PC-9 (cell line): ENCODE measurements at regions of chr6 and their contacts with region 1.

Region 1: GRCh38 chr6:7238900-7239589 is 74.0 kb downstream of the SSR1 start:
- DNase-seq: peak; percentile 53 to 84
- H3K4me3 ChIP-seq: no peak overlapping the region
- H3K27ac ChIP-seq: no peak overlapping the region
- H3K4me1 ChIP-seq: peaks cover 57% of the 10 kb centered on the region
- H3K27me3 ChIP-seq: no peaks in the 10 kb centered on the region
- CTCF ChIP-seq: peak; percentile 67

Region 2: DNA sequence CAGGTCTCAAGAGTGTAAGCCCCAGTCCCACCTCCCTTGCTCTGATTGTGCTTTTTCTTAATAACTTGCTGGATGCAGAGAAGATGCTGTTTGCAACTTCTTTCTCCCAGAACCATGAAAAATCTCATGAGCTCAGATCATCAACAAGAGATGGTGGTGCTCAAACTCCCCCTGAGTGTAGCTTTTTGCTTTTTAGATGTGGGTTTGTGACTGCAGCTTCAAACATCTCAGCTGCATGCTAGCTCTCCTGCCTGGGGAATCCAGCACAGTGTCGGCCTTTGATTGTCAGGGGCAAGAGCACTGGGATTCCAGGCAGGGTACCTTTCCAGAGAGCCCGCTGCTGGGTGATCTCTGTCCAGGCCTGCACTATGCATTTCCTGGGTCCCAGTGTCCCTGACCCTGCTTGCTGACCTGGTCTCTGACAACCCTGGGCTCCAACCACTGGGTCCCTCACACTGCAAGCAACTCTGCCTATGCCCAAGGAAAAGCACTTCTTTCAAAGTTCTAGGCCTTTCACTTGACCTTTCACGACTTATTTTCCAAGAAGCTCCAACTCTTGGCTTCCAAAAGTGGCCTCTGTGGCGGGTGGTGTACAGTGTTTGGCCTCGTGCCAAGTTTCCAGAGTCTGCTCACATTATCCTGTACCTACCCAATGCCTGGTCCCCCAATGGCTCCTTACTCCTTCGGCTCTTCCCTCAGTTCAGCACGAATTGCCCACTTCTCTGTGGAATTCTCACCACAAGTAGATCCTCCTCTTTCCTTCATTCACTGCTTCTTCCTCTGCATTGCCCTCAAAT is 720.2 kb before region 1 on chr6:
- CTCF ChIA-PET with region 1: no interaction called
- POLR2A ChIA-PET with region 1: no interaction called
- intact Hi-C with region 1: no loop called
- DNase-seq: no peak
- H3K4me3 ChIP-seq: no peak overlapping the region
- H3K27ac ChIP-seq: no peak overlapping the region
- H3K4me1 ChIP-seq: no peaks in the 10 kb centered on the region
- H3K27me3 ChIP-seq: peaks cover 55% of the 10 kb centered on the region; the same call in 1 of the 2 replicates
- CTCF ChIP-seq: no peak

Region 3: GRCh38 chr6:6724539-6725467 is 514.2 kb before region 1 on chr6:
- CTCF ChIA-PET with region 1: interaction called, 3 read pairs
- POLR2A ChIA-PET with region 1: no interaction called
- intact Hi-C with region 1: loop called (anchors 1 kb)
- DNase-seq: peak in 1 of 2 experiments; percentile 70
- H3K4me3 ChIP-seq: no peak overlapping the region
- H3K27ac ChIP-seq: no peak overlapping the region
- H3K4me1 ChIP-seq: peaks cover 14% of the 10 kb centered on the region
- H3K27me3 ChIP-seq: no peaks in the 10 kb centered on the region
- CTCF ChIP-seq: peak; percentile 64

Region 4: DNA sequence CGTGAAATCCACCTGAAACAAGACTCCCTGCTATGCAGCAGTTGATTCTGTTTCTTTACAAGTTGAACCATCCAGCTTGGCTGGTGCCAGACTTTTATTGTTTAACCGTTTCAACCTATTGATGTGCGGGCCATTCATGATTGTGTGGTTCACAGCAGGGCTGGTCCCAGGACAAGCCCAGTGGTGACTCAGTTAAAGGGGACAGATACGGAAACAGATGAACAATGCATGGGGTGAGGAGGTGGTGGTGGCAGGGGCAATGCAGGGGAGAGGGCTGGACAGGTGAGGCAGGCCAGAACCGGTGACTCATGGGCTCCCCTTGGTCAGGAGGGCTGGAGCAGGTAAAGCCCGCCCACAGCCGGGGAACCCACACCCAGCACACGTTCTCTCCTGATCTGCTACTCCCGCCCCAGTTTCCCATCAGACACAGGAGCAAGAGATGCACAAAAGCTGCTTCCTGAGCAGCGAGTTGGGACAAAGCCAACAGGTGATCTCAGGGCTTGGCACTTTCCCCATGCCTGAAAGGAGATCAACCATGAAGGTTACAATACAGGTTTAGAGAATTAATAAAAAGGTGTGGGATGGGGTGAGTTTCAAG is 418.3 kb before region 1 on chr6:
- CTCF ChIA-PET with region 1: interaction called, 3 read pairs
- POLR2A ChIA-PET with region 1: interaction called, 3 read pairs
- intact Hi-C with region 1: loop called (anchors 2 kb)
- DNase-seq: peak; percentile 96 to 97
- H3K4me3 ChIP-seq: no peak overlapping the region
- H3K27ac ChIP-seq: peak overlapping the region; percentile 94
- H3K4me1 ChIP-seq: peaks cover 69% of the 10 kb centered on the region
- H3K27me3 ChIP-seq: no peaks in the 10 kb centered on the region
- CTCF ChIP-seq: no peak

Region 5: GRCh38 chr6:7107578-7108195 is 131.4 kb before region 1 on chr6 and contains the start of gene RREB1:
- CTCF ChIA-PET with region 1: interaction called, 3 read pairs
- POLR2A ChIA-PET with region 1: no interaction called
- intact Hi-C with region 1: loop called (anchors 2 kb)
- DNase-seq: peak in 1 of 2 experiments; percentile 40
- H3K4me3 ChIP-seq: peak within 1 kb of the TSS; percentile 90
- H3K27ac ChIP-seq: peak within 1 kb of the TSS; percentile 69
- H3K4me1 ChIP-seq: peaks cover 29% of the 10 kb centered on the region
- H3K27me3 ChIP-seq: no peaks in the 10 kb centered on the region
- CTCF ChIP-seq: no peak
- total RNA-seq, gene RREB1: 29.2 and 38.4 TPM in 2 replicates

Region 6: DNA sequence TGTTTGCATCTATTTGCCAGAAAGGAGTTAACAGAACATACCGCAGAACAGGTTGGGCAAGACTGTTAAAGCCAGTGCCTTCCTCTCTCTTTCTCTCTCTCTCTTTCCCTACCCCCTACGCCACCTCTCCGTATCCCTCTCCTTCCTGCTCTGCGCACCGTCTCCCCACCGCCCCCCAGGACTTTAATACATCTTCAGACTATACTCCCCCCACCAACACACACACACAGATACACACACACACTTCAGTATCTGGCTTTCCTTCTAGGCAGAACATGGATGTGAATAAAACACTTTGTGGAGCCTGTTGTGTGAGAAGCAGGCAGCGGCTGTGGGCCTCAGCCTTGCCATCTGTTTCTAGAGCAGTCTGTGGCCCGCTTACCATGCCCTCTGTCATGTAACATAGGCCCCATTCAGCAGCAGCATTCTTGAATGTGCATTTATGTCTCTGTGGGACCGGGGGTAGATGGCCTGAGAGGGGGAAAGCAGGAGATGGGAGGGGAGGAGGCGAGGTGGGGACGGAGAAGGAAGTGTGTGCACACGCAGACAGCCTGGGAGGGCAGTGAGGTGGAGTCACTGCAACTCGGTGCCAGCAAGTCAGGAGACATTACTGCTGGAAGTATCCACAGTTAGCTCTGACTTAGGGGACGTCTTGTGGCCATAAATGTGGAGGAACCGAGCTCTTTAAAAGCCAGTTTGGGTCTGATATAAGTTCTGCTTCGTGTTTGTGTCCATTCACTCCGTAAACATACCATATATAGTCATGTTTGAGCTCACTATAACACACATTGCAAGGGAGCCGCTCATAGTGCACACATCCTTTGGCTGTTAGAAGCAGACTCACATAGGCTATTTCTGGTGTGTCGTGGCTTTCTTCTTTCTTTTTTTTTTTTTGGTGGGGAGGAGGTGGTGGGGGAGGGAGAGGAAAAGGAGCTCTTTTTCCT is 92.9 kb before region 1 on chr6:
- CTCF ChIA-PET with region 1: no interaction called
- POLR2A ChIA-PET with region 1: interaction called, 3 read pairs
- intact Hi-C with region 1: loop called (anchors 1 kb)
- DNase-seq: peak; percentile 60 to 72
- H3K4me3 ChIP-seq: peak overlapping the region; percentile 66
- H3K27ac ChIP-seq: peak overlapping the region; percentile 91
- H3K4me1 ChIP-seq: peaks cover 72% of the 10 kb centered on the region
- H3K27me3 ChIP-seq: no peaks in the 10 kb centered on the region
- CTCF ChIP-seq: no peak

Region 7: GRCh38 chr6:7215131-7215530 is 23.9 kb before region 1 on chr6:
- CTCF ChIA-PET with region 1: no interaction called
- POLR2A ChIA-PET with region 1: no interaction called
- intact Hi-C with region 1: no loop called
- DNase-seq: peak in 1 of 2 experiments; percentile 28
- H3K4me3 ChIP-seq: no peak overlapping the region
- H3K27ac ChIP-seq: no peak overlapping the region
- H3K4me1 ChIP-seq: 0 out of 2 replicates have a peak, but pooled peaks cover 7% of the 10 kb centered on the region
- H3K27me3 ChIP-seq: no peaks in the 10 kb centered on the region
- CTCF ChIP-seq: no peak